ENCODE measurements at regions of chr17 and their contacts with region 1.

Region 1: GRCh38 chr17:42928714-42929496 is 28.3 kb downstream of the G6PC1 start:
- DNase-seq: peak; percentile 60
- ATAC-seq: peak; percentile 94
- H3K4me3 Mint-ChIP-seq: peak overlapping the region; percentile 0
- H3K27ac Mint-ChIP-seq: peak overlapping the region; percentile 48
- H3K4me1 Mint-ChIP-seq: peaks cover 14% of the 10 kb centered on the region
- H3K27me3 Mint-ChIP-seq: peaks cover 4% of the 10 kb centered on the region

Region 2: DNA sequence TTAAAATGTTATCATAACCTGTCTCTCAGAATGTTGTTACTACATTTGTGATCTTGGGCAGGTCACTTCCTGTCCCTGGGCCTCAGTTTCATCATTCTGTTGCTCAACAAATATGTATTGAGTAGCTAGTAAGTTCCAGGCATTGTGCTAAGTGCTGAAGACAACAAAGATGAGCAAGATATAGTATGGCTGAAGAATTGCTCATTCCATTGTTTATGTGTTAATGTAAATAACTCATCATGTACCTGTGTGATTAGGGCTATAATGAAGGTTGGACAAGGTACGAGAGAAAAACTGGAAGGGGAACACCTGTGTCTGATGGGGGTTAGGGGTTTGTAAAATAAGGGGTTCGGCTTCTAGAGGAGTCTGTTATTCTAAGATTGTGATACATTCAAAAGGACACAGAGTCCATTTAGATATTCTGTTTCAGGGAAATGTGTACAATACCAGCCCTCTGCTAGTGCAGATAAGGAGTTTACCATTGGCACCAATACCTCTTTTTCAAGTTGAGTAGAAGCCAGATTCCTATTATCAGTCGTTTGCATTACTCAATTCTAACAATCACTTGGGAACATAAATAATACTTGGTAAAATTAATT is 299.4 kb before region 1 on chr17:
- CTCF ChIA-PET with region 1: no interaction called
- POLR2A ChIA-PET with region 1: no interaction called
- intact Hi-C with region 1: no loop called
- DNase-seq: no peak
- ATAC-seq: no peak
- H3K4me3 Mint-ChIP-seq: no peak overlapping the region
- H3K27ac Mint-ChIP-seq: no peak overlapping the region
- H3K4me1 Mint-ChIP-seq: no peaks in the 10 kb centered on the region
- H3K27me3 Mint-ChIP-seq: no peaks in the 10 kb centered on the region

Region 3: GRCh38 chr17:42814633-42815399 is 114.1 kb before region 1 on chr17:
- CTCF ChIA-PET with region 1: interaction called, 15 read pairs
- POLR2A ChIA-PET with region 1: no interaction called
- intact Hi-C with region 1: loop called in 1 of 2 experiments (anchors 5 kb)
- DNase-seq: no peak
- ATAC-seq: no peak
- H3K4me3 Mint-ChIP-seq: no peak overlapping the region
- H3K27ac Mint-ChIP-seq: no peak overlapping the region
- H3K4me1 Mint-ChIP-seq: no peaks in the 10 kb centered on the region
- H3K27me3 Mint-ChIP-seq: no peaks in the 10 kb centered on the region